Naive thymus-derived CD4-positive, alpha-beta T cell (primary cell): ENCODE measurements at regions of chr1 and their contacts with region 1.

Region 1: DNA sequence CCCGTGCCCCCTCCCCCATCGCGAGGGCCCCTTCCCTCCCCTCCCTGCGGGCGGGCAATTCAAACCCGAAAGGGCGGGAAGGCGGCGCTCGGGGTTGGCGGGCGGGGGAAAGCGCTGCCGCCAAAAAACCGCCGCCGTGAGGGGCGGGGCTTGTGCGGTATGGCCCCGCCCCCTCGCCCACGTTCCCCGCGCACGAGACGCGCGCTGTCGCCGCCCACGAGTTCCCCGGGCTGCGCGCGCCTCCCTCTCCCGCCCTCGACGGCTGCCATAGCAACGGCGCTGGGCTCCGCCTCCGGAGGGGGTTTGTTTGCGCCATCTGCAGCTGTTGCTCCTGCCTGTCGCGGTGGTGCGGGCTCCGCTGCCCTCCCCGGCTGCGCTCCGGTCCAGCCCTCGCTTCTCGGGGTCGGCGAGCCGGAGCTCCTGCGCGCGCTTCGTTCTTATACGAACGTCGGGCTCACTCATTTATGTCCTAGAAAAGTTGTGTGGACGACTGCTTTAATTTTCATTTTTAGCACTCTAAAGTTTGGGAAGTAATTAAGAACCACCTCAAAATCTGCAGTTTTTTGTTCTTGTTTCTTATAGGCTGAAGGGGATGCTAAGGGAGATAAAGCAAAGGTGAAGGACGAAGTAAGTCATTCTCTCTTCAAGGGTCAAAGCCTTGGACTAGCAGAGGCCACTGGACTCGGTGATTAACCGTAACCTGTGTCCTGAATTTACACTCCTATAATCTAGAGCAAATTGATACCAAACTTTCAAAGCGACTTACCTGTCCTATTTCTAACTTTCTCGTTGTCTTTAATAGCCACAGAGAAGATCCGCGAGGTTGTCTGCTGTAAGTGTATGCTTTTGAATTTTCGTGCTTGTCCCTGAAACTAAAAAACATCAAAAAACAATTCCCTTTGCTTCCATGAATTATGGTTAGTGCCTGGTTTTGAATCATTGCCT is 933 bp downstream of the HMGN2 start:
- DNase-seq: peak; percentile 92 to 97 (median 95)
- ATAC-seq: peak; percentile 90
- H3K4me3 ChIP-seq: peak overlapping the region; percentile 72
- H3K4me3 Mint-ChIP-seq: peak overlapping the region; percentile 85 to 100 (median 88)
- H3K27ac ChIP-seq: peak overlapping the region; percentile 100
- H3K27ac Mint-ChIP-seq: peak overlapping the region; percentile 60 to 97 (median 87)
- H3K4me1 ChIP-seq: peaks cover 30 to 35% of the 10 kb centered on the region in 2 donors
- H3K4me1 Mint-ChIP-seq: peaks cover 28 to 62% (median 59%) of the 10 kb centered on the region in 7 donors
- H3K27me3 ChIP-seq: no peaks in the 10 kb centered on the region
- H3K27me3 Mint-ChIP-seq: peaks cover 0 to 2% (median 0%) of the 10 kb centered on the region in 5 donors

Region 2: DNA sequence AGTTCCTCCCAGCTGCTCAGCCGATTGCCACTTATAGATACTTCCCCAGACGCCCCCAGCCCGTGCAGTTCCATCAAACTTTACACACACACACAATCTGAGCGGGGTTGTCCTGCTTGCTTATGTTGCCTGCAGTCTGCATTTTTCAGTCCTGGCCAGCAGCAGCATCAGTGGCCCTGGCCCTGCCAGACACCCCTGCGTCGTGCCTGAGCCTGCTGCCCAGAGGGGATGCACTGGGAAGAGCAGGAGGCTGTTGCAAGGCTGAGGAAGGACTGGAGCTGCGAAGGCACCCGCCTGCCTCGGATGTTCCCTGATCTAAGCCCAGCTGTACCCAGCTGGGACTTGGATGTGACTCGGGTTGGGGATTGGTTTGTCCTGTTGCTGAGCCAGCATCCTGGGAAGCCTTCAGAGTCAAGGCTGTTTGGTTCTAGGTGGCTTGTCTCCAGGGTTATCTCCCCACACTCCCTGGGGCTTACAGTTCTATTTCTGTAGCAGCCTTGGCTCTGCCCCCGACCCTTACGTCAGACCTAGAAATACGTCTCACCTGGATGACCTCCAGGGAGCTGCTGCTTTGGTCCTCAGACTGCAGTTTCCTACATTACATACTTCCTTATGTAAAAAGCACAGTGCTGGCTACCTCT is 814.3 kb before region 1 on chr1:
- CTCF ChIA-PET with region 1: no interaction called
- POLR2A ChIA-PET with region 1: no interaction called
- intact Hi-C with region 1: no loop called
- DNase-seq: no peak
- ATAC-seq: no peak
- H3K4me3 ChIP-seq: no peak overlapping the region
- H3K4me3 Mint-ChIP-seq: peak overlapping the region in 2 of 10 donors; percentile 15 to 44
- H3K27ac ChIP-seq: no peak overlapping the region
- H3K27ac Mint-ChIP-seq: peak overlapping the region; percentile 29 to 81 (median 75)
- H3K4me1 ChIP-seq: peaks cover 0 to 24% of the 10 kb centered on the region in 2 donors
- H3K4me1 Mint-ChIP-seq: peaks cover 8 to 88% (median 81%) of the 10 kb centered on the region in 7 donors
- H3K27me3 ChIP-seq: no peaks in the 10 kb centered on the region
- H3K27me3 Mint-ChIP-seq: peaks cover 0 to 54% (median 0%) of the 10 kb centered on the region in 5 donors

Region 3: GRCh38 chr1:26111530-26112406 is 361.4 kb before region 1 on chr1 and contains the start of gene PDIK1L:
- CTCF ChIA-PET with region 1: no interaction called
- POLR2A ChIA-PET with region 1: no interaction called
- intact Hi-C with region 1: loop called (anchors 2 to 5 kb)
- DNase-seq: peak; percentile 91 to 95 (median 94)
- ATAC-seq: peak; percentile 93
- H3K4me3 ChIP-seq: peak within 1 kb of the TSS; percentile 93
- H3K4me3 Mint-ChIP-seq: peak within 1 kb of the TSS; percentile 86 to 99 (median 93)
- H3K27ac ChIP-seq: peak within 1 kb of the TSS; percentile 84
- H3K27ac Mint-ChIP-seq: peak within 1 kb of the TSS; percentile 84 to 98 (median 92)
- H3K4me1 ChIP-seq: peaks cover 12 to 19% of the 10 kb centered on the region in 2 donors
- H3K4me1 Mint-ChIP-seq: peaks cover 6 to 44% (median 34%) of the 10 kb centered on the region in 7 donors
- H3K27me3 ChIP-seq: no peaks in the 10 kb centered on the region
- H3K27me3 Mint-ChIP-seq: no peaks in the 10 kb centered on the region
- total RNA-seq, gene PDIK1L: 9.1 to 29.6 (median 20.3) TPM

Region 4: GRCh38 chr1:26306290-26307229 is 166.6 kb before region 1 on chr1 and contains the start of gene UBXN11:
- CTCF ChIA-PET with region 1: no interaction called
- POLR2A ChIA-PET with region 1: no interaction called
- intact Hi-C with region 1: loop called (anchors 2 kb)
- DNase-seq: peak; percentile 66 to 95 (median 89)
- ATAC-seq: peak; percentile 99
- H3K4me3 ChIP-seq: peak within 1 kb of the TSS; percentile 87
- H3K4me3 Mint-ChIP-seq: peak within 1 kb of the TSS; percentile 93 to 99 (median 98)
- H3K27ac ChIP-seq: peak within 1 kb of the TSS; percentile 76
- H3K27ac Mint-ChIP-seq: peak within 1 kb of the TSS; percentile 90 to 99 (median 96)
- H3K4me1 ChIP-seq: peaks cover 16 to 31% of the 10 kb centered on the region in 2 donors
- H3K4me1 Mint-ChIP-seq: peaks cover 25 to 58% (median 34%) of the 10 kb centered on the region in 7 donors
- H3K27me3 ChIP-seq: no peaks in the 10 kb centered on the region
- H3K27me3 Mint-ChIP-seq: no peaks in the 10 kb centered on the region
- total RNA-seq, gene UBXN11: 35.7 to 131 (median 124) TPM

Region 5: GRCh38 chr1:26431979-26432695 is 41.0 kb before region 1 on chr1 and contains the start of gene DHDDS:
- CTCF ChIA-PET with region 1: interaction called, 5 read pairs
- POLR2A ChIA-PET with region 1: interaction called, 37 read pairs
- intact Hi-C with region 1: loop called (anchors 1 kb)
- DNase-seq: peak; percentile 95 to 98 (median 97)
- ATAC-seq: peak; percentile 99
- H3K4me3 ChIP-seq: peak within 1 kb of the TSS; percentile 88
- H3K4me3 Mint-ChIP-seq: peak within 1 kb of the TSS; percentile 92 to 99 (median 96)
- H3K27ac ChIP-seq: peak within 1 kb of the TSS; percentile 76
- H3K27ac Mint-ChIP-seq: peak within 1 kb of the TSS; percentile 90 to 99 (median 93)
- H3K4me1 ChIP-seq: peaks cover 11 to 15% of the 10 kb centered on the region in 2 donors
- H3K4me1 Mint-ChIP-seq: peaks cover 14 to 26% (median 22%) of the 10 kb centered on the region in 7 donors
- H3K27me3 ChIP-seq: no peaks in the 10 kb centered on the region
- H3K27me3 Mint-ChIP-seq: peaks cover 0 to 15% (median 0%) of the 10 kb centered on the region in 5 donors
- total RNA-seq, gene DHDDS: 28.1 to 58.9 (median 37.7) TPM

Region 6: DNA sequence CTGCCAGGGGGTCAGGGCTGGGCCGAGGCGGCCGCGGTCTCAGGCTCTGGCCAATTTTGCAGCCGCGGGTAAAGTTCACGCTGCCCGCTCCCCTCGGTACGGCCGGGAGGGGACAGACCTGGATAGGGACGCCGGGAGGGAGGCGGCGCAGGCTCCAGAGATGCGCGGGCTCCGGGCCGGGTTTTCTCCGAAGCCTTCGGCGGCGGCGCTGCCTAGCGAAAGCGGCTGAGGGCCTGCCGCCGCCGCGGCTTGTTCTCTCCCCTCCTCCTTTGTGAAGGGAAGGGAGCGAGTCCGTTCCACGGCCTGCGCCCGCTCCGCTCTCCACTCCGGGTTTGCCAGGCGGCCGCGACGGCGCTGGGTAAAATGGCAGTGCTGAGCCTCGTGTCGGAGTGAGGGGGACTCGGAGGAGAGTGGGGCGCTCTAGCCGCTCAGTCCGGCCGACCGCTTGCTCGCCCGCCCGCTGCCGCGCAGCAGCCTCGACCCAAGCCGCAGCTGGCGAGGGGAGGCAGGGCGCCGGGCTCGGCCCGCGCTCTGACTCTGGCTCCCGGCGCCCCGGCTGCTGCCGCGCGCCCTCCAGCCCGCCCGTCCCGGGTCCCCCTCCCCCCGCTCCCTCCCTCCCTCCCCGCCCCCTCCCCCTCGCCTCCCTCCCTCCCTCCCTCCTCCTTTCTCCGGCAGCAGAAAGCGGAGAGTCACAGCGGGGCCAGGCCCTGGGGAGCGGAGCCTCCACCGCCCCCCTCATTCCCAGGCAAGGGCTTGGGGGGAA is 222.4 kb after region 1 on chr1 and contains the start of gene ARID1A:
- CTCF ChIA-PET with region 1: no interaction called
- POLR2A ChIA-PET with region 1: interaction called, 11 read pairs
- intact Hi-C with region 1: loop called (anchors 2 to 5 kb)
- DNase-seq: peak; percentile 94 to 98 (median 98)
- ATAC-seq: peak; percentile 81
- H3K4me3 ChIP-seq: peak within 1 kb of the TSS; percentile 81
- H3K4me3 Mint-ChIP-seq: peak within 1 kb of the TSS in 9 of 10 donors; percentile 94 to 97 (median 94)
- H3K27ac ChIP-seq: peak within 1 kb of the TSS; percentile 83
- H3K27ac Mint-ChIP-seq: peak within 1 kb of the TSS; percentile 93 to 98 (median 95)
- H3K4me1 ChIP-seq: peaks cover 36 to 39% of the 10 kb centered on the region in 2 donors
- H3K4me1 Mint-ChIP-seq: peaks cover 14 to 35% (median 31%) of the 10 kb centered on the region in 7 donors
- H3K27me3 ChIP-seq: no peaks in the 10 kb centered on the region
- H3K27me3 Mint-ChIP-seq: no peaks in the 10 kb centered on the region
- total RNA-seq, gene ARID1A: 118 to 148 (median 131) TPM

Region 7: DNA sequence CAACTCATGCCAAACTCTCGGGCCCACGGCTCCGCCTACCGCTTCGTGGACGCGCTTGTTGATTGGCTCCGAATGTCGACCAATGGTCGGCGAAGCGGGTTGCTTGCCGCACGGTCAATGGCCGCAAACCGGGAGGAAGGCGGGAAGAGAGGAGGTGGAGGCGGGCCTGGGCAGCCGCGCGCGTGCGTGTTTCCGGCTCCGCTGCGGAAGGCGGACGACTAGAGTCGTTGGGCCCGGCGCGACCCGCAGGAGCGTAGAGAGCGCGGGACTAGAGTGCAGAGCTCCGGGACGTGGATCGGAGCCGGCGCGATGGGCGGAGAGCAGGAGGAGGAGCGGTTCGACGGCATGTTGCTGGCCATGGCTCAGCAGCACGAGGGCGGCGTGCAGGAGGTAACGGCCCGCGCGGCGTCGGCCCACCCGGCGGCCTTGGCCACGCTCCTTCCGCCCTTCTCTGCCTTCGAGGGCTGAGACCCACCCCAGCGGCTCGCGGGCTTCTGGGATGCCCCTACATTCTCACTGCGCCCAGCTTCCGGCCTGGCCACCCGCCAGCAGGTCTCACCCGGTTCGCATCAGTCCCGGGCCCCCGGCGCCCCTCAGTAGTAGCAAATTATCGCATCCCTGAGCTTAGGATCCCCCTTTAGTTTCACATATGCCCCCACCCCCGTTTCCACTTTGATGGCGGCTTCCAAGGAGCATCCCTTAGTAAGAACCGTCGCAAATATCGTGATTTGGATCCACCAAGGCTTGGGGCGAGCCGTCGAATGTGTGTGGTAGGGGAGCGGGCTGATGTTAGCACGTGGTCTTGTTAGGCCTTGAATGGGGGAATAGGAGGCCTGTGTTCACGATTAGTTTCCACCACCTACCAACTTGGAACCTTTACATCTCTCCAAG is 448.6 kb after region 1 on chr1 and contains the start of gene NUDC:
- CTCF ChIA-PET with region 1: no interaction called
- POLR2A ChIA-PET with region 1: no interaction called
- intact Hi-C with region 1: loop called in 1 of 2 experiments (anchors 1 kb)
- DNase-seq: peak; percentile 87 to 97 (median 95)
- ATAC-seq: peak; percentile 97
- H3K4me3 ChIP-seq: peak within 1 kb of the TSS; percentile 79
- H3K4me3 Mint-ChIP-seq: peak within 1 kb of the TSS; percentile 82 to 98 (median 94)
- H3K27ac ChIP-seq: peak within 1 kb of the TSS; percentile 88
- H3K27ac Mint-ChIP-seq: peak within 1 kb of the TSS; percentile 88 to 98 (median 96)
- H3K4me1 ChIP-seq: peaks cover 11 to 12% of the 10 kb centered on the region in 2 donors
- H3K4me1 Mint-ChIP-seq: peaks cover 12 to 46% (median 34%) of the 10 kb centered on the region in 7 donors
- H3K27me3 ChIP-seq: no peaks in the 10 kb centered on the region
- H3K27me3 Mint-ChIP-seq: no peaks in the 10 kb centered on the region
- total RNA-seq, gene NUDC: 36.5 to 69.0 (median 40.5) TPM